Activated CD4-positive, alpha-beta memory T cell treated with anti-CD3 and anti-CD28 coated beads for 36 hours (primary cell): ENCODE measurements at regions of chr14 and their contacts with region 1.

Region 1: DNA sequence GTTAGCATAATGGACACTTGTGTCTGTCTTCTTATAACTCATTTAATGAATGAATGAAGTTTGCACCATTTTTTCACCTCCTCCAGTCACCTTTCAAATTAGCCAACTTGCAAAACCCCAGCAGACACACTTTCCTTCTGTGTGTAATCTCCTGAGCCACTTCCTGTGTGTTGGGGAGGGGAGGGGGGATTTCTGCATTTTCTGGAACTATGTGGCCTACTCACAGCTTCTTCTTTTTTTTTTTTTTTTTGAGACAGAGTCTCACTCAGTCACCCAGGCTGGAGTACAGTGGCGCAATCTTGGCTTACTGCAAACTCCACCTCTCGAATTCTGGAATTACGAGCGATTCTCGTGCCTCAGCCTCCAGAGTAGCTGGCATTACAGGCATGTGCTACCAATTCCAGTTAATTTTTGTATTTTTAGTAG is 4.1 kb upstream of the SERPINA1 start:
- DNase-seq: peak; percentile 82
- H3K4me3 Mint-ChIP-seq: no peak overlapping the region
- H3K27ac Mint-ChIP-seq: peak overlapping the region; percentile 86
- H3K4me1 Mint-ChIP-seq: peaks cover 51% of the 10 kb centered on the region
- H3K27me3 Mint-ChIP-seq: peaks cover 2% of the 10 kb centered on the region

Region 2: DNA sequence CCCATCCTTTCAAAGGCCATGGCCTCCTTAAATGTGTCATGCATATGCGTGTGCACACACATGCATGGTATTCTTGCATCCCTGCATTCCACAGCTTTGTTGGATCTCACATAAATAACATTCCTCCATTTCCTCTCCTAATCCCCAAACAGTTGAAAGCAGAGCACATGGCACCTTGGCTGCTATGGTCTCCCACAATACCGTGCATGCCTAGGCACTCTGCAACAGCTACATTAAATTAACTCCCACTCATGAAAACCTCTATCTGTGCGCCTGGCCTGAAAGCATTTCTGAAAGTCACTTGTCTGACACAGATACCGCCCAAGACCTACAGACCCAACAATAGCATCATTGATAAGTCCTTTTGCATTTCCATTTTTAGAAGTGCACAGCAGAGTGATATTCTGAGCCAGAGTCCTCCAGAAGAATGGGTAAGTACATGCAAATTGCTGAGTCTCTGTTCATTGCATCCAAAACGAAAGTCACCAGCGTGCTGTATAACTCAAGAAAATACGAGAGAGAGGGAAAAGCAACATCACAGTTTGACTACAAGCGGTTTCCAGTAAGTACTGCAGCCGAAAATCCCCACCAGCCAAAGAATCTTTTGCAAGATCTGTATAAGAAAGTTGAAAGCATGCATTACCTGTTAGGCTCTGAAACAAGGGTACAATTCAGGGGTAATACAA is 416.6 kb before region 1 on chr14:
- CTCF ChIA-PET with region 1: no interaction called
- POLR2A ChIA-PET with region 1: no interaction called
- intact Hi-C with region 1: loop called (anchors 5 kb)
- DNase-seq: peak; percentile 70
- H3K4me3 Mint-ChIP-seq: peak overlapping the region; percentile 75
- H3K27ac Mint-ChIP-seq: peak overlapping the region; percentile 98
- H3K4me1 Mint-ChIP-seq: peaks cover 97% of the 10 kb centered on the region
- H3K27me3 Mint-ChIP-seq: no peaks in the 10 kb centered on the region

Region 3: DNA sequence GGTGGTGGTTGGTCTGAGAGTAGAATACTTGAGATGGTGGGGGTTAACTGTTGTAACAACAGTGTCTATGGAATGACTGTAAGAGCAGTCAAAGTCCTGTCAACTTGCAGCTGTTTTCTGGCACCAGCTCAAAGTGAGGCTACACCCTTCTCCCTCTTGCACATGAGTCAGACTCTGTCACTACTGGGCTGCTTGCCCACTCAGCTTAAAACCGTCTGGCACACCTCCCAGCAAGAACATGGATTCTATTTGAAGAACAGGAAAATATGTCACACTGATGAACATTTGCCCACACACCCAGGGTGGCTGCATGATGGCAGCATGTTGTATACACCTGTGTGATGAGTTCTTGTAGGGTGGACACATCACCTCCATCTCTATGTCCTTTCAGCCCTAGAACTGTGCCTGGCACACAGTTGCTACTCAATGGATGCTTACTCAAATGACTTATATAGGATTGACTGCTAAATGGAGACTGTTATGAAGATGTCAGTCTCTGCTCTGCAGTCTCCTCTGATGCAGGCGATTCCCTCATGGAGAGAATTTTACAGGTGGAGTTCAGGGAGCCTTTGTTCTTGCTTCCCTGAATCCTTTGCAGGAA is 50.1 kb before region 1 on chr14:
- CTCF ChIA-PET with region 1: no interaction called
- POLR2A ChIA-PET with region 1: interaction called, 6 read pairs
- intact Hi-C with region 1: loop called (anchors 1 kb)
- DNase-seq: peak; percentile 80
- H3K4me3 Mint-ChIP-seq: no peak overlapping the region
- H3K27ac Mint-ChIP-seq: peak overlapping the region; percentile 80
- H3K4me1 Mint-ChIP-seq: peaks cover 78% of the 10 kb centered on the region
- H3K27me3 Mint-ChIP-seq: no peaks in the 10 kb centered on the region

Region 4: GRCh38 chr14:94355191-94355797 is 37.2 kb before region 1 on chr14:
- CTCF ChIA-PET with region 1: no interaction called
- POLR2A ChIA-PET with region 1: no interaction called
- intact Hi-C with region 1: loop called (anchors 2 kb)
- DNase-seq: peak; percentile 51
- H3K4me3 Mint-ChIP-seq: no peak overlapping the region
- H3K27ac Mint-ChIP-seq: no peak overlapping the region
- H3K4me1 Mint-ChIP-seq: peaks cover 33% of the 10 kb centered on the region
- H3K27me3 Mint-ChIP-seq: peaks cover 9% of the 10 kb centered on the region

Region 5: DNA sequence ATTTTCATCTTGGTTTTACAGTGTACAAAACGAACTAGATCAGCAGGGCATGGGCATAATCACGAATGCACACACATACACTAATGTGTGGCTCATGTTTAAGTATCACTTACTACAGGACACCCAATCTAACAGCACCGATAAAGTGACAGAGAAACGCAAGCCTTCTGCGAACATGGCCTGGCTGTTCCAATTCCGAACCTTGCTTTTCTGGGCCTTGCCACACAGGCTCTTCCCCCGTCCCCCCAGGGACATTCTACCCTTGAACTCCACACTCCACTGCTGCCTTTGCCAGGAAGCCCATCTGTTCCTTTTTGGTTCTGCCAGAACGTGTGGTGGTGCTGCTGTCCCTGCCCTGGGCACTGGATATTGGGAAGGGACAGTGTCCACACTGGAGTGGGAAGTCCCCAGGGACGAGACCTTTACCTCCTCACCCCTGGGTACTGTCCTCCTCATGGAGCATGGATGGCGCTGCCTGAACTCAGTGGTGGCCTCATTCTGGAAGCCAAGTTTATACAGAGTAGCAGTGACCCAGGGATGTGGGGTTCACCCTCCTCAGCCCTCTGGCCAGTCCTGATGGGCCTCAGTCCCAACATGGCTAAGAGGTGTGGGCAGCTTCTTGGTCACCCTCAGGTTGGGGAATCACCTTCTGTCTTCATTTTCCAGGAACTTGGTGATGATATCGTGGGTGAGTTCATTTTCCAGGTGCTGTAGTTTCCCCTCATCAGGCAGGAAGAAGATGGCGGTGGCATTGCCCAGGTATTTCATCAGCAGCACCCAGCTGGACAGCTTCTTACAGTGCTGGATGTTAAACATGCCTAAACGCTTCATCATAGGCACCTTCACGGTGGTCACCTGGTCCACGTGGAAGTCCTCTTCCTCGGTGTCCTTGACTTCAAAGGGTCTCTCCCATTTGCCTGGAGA is 12.0 kb before region 1 on chr14:
- CTCF ChIA-PET with region 1: no interaction called
- POLR2A ChIA-PET with region 1: interaction called, 4 read pairs
- intact Hi-C with region 1: loop called (anchors 1 kb)
- DNase-seq: peak; percentile 56
- H3K4me3 Mint-ChIP-seq: no peak overlapping the region
- H3K27ac Mint-ChIP-seq: peak overlapping the region; percentile 74
- H3K4me1 Mint-ChIP-seq: peaks cover 33% of the 10 kb centered on the region
- H3K27me3 Mint-ChIP-seq: no peaks in the 10 kb centered on the region

Region 6: DNA sequence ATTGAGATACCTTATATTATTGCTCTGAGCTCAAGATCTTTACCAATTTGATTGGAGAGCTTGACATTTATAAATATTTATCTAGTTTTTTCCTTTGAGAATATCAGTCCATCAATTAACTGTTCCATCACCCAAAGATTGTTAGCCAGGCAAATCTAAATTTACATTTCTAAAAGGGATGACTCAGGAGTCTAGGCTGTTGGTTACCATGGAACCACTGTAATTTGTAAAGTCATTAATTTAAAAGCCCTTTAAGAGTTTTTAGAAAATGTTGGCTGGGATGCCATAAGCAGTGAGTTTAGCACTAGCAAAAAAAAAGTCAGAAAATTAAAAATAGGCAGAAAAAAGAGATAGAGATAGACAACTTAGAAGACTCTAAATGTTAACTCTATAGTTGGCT is 15.4 kb after region 1 on chr14:
- CTCF ChIA-PET with region 1: no interaction called
- POLR2A ChIA-PET with region 1: no interaction called
- intact Hi-C with region 1: no loop called
- DNase-seq: no peak
- H3K4me3 Mint-ChIP-seq: no peak overlapping the region
- H3K27ac Mint-ChIP-seq: no peak overlapping the region
- H3K4me1 Mint-ChIP-seq: no peaks in the 10 kb centered on the region
- H3K27me3 Mint-ChIP-seq: peaks cover 5% of the 10 kb centered on the region